ENCODE measurements at regions of chr2 and their contacts with region 1.

Region 1: DNA sequence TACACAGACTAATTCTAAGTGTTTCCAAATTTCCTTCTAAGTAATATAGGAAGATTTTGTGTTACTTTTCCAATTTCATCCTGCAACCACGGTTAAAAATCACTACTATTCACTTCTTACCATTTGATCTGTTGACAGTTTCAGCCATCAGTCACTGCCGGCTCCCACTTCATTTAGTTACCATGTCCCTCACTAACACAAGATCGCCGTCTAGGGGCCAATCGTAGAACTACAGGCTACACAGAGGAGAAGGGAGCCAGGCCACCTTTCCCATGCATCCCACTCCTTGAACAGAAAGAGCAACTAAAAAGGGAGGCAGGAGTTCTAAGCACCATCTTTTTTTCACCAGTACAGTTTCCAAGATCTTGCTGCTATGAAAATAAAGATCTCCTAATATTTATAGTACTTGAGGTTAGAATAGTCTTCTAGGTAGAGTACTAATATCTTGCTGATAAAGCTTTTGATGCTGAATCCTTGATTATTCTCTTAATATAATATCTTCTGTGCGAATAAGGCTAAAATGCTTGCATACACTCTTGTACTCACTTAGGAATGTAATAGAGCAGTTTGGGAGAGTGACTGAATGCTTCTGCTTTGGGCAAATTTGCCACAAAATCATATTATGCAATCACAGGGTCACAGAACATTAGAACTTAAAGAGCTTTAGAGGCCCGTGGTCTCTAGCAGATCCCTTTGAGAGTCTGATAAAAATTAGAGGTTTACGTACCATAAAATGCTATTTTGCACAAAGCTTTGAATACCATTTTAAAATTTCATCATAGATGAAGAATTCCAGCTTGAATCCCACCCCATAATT is 39.5 kb upstream of the CYP1B1 start:
- DNase-seq: no peak
- H3K4me3 ChIP-seq: no peak overlapping the region
- H3K27ac ChIP-seq: peak overlapping the region; percentile 45
- H3K4me1 ChIP-seq: peaks cover 16% of the 10 kb centered on the region
- H3K27me3 ChIP-seq: no peaks in the 10 kb centered on the region
- CTCF ChIP-seq: peak; percentile 45 to 85 (median 51)
- POLR2A ChIP-seq: no peak

Region 2: GRCh38 chr2:38164881-38165280 is 49.5 kb after region 1 on chr2:
- intact Hi-C with region 1: loop called (anchors 10 kb)
- DNase-seq: no peak
- H3K4me3 ChIP-seq: no peak overlapping the region
- H3K27ac ChIP-seq: no peak overlapping the region
- H3K4me1 ChIP-seq: peaks cover 22% of the 10 kb centered on the region
- H3K27me3 ChIP-seq: no peaks in the 10 kb centered on the region
- CTCF ChIP-seq: no peak
- POLR2A ChIP-seq: no peak